H1 (cell line): ENCODE measurements at regions of chr4 and their contacts with region 1.

Region 1: GRCh38 chr4:185384930-185385331 is 10.8 kb downstream of the LRP2BP start:
- DNase-seq: no peak
- H3K4me3 ChIP-seq: no peak overlapping the region
- H3K27ac ChIP-seq: no peak overlapping the region
- H3K4me1 ChIP-seq: peaks cover 0 to 3% (median 0%) of the 10 kb centered on the region in 4 experiments; a peak in 1 of 7 replicates
- H3K27me3 ChIP-seq: no peaks in the 10 kb centered on the region
- CTCF ChIP-seq: no peak
- EP300 ChIP-seq: no peak
- POLR2A ChIP-seq: no peak
- RAD21 ChIP-seq: no peak

Region 2: DNA sequence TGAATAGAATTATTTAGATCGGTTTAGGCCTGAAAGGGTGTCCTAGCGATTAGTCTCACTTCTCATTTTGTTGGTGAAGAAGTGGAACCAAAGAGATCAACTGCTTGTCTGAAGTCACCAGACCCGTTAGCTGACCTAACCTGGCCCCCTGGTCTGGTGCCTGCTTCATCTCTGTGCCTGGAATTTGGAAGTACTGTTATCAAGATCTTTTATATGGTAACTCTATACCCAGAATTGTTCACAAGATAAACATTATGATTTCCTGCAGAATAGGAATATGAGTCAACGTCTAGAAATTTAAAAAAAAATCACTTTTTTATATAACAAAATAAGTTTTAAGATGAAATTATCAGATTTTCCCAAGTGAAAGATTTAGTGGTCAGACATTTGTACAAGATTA is 26.4 kb before region 1 on chr4:
- CTCF ChIA-PET with region 1: no interaction called
- POLR2A ChIA-PET with region 1: no interaction called
- DNase-seq: no peak
- H3K4me3 ChIP-seq: no peak overlapping the region
- H3K27ac ChIP-seq: no peak overlapping the region
- H3K4me1 ChIP-seq: peaks cover 0 to 3% (median 0%) of the 10 kb centered on the region in 4 experiments; a peak in 2 of 7 replicates
- H3K27me3 ChIP-seq: no peaks in the 10 kb centered on the region
- CTCF ChIP-seq: no peak
- EP300 ChIP-seq: no peak
- POLR2A ChIP-seq: no peak
- RAD21 ChIP-seq: no peak

Region 3: DNA sequence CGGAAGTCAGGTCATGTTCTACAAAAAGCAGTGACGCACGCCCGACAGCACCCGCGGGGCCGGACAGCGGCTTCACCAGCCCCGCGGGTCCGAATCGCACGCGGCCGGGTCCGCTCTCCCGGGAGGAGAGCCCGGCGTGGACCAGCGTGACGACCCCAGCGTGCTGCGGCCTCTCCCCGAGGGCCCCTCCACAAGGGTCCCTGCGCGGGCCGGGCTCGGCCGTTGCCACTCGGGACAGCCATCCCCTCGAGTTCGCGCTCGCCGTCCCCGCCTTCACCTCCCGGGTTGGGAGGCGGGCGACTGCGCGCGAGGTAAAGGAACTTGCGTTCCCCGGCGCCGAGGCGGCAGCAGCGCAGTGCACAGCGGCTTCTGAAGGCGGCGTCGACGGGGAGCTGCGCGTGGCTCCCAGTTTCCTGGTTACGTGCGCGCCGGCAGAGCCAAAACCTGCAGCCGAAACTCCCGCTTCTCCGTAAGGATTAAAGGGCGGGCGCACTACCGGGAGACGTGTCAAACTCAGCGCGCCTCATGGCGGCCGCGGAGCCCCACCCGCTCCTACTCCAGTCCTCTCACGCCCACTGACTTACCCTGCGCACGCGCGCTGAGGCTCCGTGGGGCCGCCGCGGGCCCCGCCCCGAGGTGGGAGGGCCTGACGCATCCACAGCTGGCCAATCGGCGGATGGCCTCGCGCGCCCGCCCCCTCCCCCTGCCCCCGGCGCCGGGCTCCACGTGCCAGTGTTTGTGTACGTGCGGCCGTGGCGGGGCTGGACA is 11.2 kb after region 1 on chr4:
- CTCF ChIA-PET with region 1: interaction called, 3 read pairs
- POLR2A ChIA-PET with region 1: interaction called, 25 read pairs
- DNase-seq: peak in 1 of 2 experiments; percentile 86
- H3K4me3 ChIP-seq: peak overlapping the region; percentile 27 to 70 (median 54)
- H3K27ac ChIP-seq: peak overlapping the region; percentile 34; the same call in 1 of the 2 replicates
- H3K4me1 ChIP-seq: peaks cover 0 to 6% (median 4%) of the 10 kb centered on the region in 4 experiments; a peak in 4 of 7 replicates
- H3K27me3 ChIP-seq: no peaks in the 10 kb centered on the region
- CTCF ChIP-seq: no peak
- EP300 ChIP-seq: peak; percentile 6 to 20; a peak in 2 of 3 replicates
- POLR2A ChIP-seq: peak in 1 of 2 experiments; percentile 28; a peak in 2 of 3 replicates
- RAD21 ChIP-seq: no peak; a peak in 2 of 4 replicates